Aorta (tissue), 5 donors: ENCODE measurements at regions of chr10 and their contacts with region 1.

Region 1: DNA sequence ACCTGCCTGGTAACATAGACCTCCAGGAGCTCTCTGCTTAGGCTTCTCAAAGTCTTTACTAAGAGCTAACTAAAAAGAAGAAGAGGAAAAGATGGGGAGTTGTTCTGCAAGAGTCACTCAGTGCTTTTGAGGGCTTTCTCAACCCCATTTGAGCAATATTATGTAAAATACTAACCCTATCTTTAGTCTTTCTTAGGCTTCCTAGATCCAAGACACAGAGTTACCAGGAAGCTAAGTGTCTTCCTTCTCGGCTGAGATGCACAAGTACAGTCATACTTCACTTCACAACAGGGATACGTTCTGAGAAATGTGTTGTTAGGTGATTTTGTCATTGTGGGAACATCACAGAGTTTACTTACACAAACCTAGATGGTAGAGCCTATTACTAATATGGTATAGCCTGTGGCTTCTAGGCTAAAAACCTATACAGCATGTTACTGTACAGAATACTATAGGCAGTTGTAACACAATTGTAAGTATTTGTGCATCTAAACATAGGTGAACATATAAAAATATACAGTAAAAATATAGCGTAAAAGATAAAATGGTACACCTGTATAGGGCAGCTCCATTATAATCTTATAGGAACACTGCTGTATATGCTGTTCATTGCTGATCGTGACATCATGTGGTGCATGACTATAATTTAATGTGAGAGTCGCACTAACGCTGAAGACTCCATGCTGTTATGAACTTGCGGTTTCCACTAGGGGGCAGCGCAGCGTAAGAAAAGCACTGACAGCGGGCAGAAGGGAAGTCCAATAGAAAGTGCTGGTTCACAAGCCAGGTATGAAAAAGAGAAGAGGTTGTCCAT is 16.3 kb downstream of the ANKRD22 start:
- DNase-seq: peak; percentile 91 to 95
- ATAC-seq: peak; percentile 92
- H3K4me3 ChIP-seq: no peak overlapping the region
- H3K27ac ChIP-seq: no peak overlapping the region
- H3K4me1 ChIP-seq: no peaks in the 10 kb centered on the region
- H3K27me3 ChIP-seq: no peaks in the 10 kb centered on the region

Region 2: DNA sequence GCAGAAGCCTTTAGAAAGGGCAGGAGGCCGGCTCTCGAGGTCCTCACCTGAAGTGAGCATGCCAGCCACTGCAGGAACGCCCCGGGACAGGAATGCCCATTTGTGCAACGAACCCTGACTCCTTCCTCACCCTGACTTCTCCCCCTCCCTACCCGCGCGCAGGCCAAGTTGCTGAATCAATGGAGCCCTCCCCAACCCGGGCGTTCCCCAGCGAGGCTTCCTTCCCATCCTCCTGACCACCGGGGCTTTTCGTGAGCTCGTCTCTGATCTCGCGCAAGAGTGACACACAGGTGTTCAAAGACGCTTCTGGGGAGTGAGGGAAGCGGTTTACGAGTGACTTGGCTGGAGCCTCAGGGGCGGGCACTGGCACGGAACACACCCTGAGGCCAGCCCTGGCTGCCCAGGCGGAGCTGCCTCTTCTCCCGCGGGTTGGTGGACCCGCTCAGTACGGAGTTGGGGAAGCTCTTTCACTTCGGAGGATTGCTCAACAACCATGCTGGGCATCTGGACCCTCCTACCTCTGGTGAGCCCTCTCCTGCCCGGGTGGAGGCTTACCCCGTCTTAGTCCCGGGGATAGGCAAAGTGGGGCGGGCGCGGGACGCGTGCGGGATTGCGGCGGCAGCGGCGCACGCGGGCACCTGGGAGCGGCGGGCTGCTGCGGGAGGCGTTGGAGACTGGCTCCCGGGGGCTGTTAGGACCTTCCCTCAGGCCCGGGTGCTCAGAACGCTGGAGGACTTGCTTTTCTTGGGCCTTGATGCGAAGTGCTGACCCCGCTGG is 155.3 kb after region 1 on chr10 and contains the start of gene FAS:
- intact Hi-C with region 1: loop called (anchors 5 kb)
- DNase-seq: peak; percentile 86 to 90
- ATAC-seq: peak; percentile 86
- H3K4me3 ChIP-seq: peak within 1 kb of the TSS; percentile 56 to 91
- H3K27ac ChIP-seq: peak within 1 kb of the TSS; percentile 0 to 64
- H3K4me1 ChIP-seq: peaks cover 3 to 6% of the 10 kb centered on the region in 2 donors
- H3K27me3 ChIP-seq: no peaks in the 10 kb centered on the region
- total RNA-seq, gene FAS: 27.4 to 28.5 TPM

Region 3: DNA sequence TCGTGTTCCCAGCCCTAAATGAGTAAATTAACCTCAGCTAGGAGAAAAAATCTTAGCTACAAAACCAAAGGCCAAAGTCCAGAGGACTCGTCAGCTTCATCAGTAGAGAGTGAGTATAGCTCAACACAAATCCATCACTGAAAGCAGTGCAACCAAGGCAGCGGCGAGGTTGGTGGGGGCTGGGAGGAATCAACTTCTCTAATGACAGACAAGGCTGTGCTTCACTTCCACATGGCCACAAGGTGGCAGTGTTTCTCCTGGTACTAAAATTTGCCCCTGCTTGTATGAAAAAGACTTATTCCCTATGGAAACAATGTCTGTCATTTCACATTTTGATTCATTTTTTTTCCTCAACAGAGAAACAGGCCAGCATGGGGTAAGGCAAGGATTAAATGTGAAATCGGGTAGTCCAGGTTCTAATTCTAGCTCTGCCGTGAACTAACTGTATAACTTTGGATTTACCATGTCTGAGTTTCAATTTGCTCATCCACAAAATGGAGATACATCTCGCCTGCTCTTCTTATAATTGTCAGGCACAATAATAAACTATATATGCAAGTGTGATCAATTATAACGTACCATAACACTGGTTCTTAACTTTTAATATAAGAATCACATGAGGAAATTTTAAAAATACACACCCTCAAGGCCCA is 194.6 kb after region 1 on chr10:
- intact Hi-C with region 1: loop called in 1 of 2 experiments (anchors 10 kb)
- DNase-seq: peak; percentile 80 to 85
- ATAC-seq: peak; percentile 86
- H3K4me3 ChIP-seq: no peak overlapping the region
- H3K27ac ChIP-seq: no peak overlapping the region
- H3K4me1 ChIP-seq: peaks cover 0 to 2% of the 10 kb centered on the region in 2 donors
- H3K27me3 ChIP-seq: no peaks in the 10 kb centered on the region

Region 4: GRCh38 chr10:89217057-89217990 is 382.0 kb after region 1 on chr10:
- intact Hi-C with region 1: loop called in 1 of 2 experiments (anchors 5 kb)
- DNase-seq: no peak
- ATAC-seq: peak; percentile 55
- H3K4me3 ChIP-seq: no peak overlapping the region
- H3K27ac ChIP-seq: no peak overlapping the region
- H3K4me1 ChIP-seq: no peaks in the 10 kb centered on the region
- H3K27me3 ChIP-seq: no peaks in the 10 kb centered on the region

Region 5: DNA sequence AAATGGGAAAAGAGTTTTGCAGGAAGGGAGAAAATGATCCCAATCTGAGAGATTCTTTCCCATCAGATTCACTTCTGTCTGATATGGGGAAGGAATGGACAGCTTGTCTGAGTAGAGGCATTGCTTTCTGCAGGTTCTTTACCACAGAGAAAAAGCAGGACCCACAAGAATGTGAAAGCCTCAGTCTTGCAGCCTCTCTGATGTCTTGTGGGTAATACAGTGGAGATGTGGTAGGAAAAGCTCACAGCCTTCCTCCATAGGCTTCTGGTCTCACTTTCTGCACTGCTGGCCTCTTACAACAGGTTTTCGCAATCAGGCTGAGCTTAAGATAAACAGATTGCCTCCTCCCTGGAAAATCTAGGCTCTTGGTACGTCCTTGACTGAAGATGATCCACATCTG is 557.7 kb after region 1 on chr10:
- intact Hi-C with region 1: no loop called
- DNase-seq: no peak
- ATAC-seq: peak; percentile 81
- H3K4me3 ChIP-seq: peak overlapping the region; percentile 90 to 98
- H3K27ac ChIP-seq: peak overlapping the region; percentile 67 to 71
- H3K4me1 ChIP-seq: peaks cover 1 to 3% of the 10 kb centered on the region in 2 donors
- H3K27me3 ChIP-seq: no peaks in the 10 kb centered on the region